Psoas muscle (tissue), 8 donors: ENCODE measurements at regions of chr1 and their contacts with region 1.

Region 1: GRCh38 chr1:178031856-178032320 is 62.0 kb upstream of the RASAL2 start:
- DNase-seq: peak; percentile 85 to 87
- ATAC-seq: peak; percentile 69 to 81 (median 80)
- H3K4me3 ChIP-seq: no peak overlapping the region
- H3K27ac ChIP-seq: no peak overlapping the region
- H3K4me1 ChIP-seq: peaks cover 28% of the 10 kb centered on the region
- H3K27me3 ChIP-seq: no peaks in the 10 kb centered on the region
- CTCF ChIP-seq: peak; percentile 79

Region 2: DNA sequence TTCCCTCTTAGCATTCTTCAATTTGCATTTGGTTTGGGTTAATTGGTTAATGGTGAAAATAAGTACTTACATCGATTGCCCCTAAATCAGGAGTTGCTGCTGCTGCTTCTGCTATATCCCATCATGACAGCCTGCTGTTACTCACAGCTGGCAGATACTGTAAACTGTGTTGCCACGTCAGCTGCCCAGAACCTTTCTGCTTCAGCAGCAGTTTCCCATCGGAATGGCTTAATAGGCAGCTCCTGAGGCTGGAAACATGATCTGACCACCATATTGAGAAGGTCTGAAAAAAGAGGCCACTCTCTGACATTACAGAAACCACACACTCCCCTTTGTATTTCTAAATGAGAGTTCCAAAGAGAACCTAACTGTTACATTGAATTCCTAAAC is 47.8 kb before region 1 on chr1:
- intact Hi-C with region 1: loop called in 1 of 2 experiments (anchors 10 kb)
- DNase-seq: peak; percentile 44 to 68
- ATAC-seq: peak; percentile 86 to 99 (median 96)
- H3K4me3 ChIP-seq: peak overlapping the region; percentile 5
- H3K27ac ChIP-seq: peak overlapping the region; percentile 11
- H3K4me1 ChIP-seq: no peaks in the 10 kb centered on the region
- H3K27me3 ChIP-seq: no peaks in the 10 kb centered on the region
- CTCF ChIP-seq: no peak

Region 3: GRCh38 chr1:178093205-178093957 is 61.5 kb after region 1 on chr1:
- intact Hi-C with region 1: loop called (anchors 5 kb)
- DNase-seq: peak; percentile 93 to 96
- ATAC-seq: peak; percentile 92 to 96 (median 94)
- H3K4me3 ChIP-seq: peak overlapping the region; percentile 72
- H3K27ac ChIP-seq: peak overlapping the region; percentile 79
- H3K4me1 ChIP-seq: peaks cover 21% of the 10 kb centered on the region
- H3K27me3 ChIP-seq: no peaks in the 10 kb centered on the region
- CTCF ChIP-seq: peak; percentile 10

Region 4: GRCh38 chr1:178189814-178190213 is 157.9 kb after region 1 on chr1:
- intact Hi-C with region 1: loop called in 1 of 2 experiments (anchors 5 kb)
- DNase-seq: no peak
- ATAC-seq: peak in 3 of 4 donors; percentile 42 to 73 (median 62)
- H3K4me3 ChIP-seq: no peak overlapping the region
- H3K27ac ChIP-seq: no peak overlapping the region
- H3K4me1 ChIP-seq: no peaks in the 10 kb centered on the region
- H3K27me3 ChIP-seq: no peaks in the 10 kb centered on the region
- CTCF ChIP-seq: peak; percentile 42

Region 5: DNA sequence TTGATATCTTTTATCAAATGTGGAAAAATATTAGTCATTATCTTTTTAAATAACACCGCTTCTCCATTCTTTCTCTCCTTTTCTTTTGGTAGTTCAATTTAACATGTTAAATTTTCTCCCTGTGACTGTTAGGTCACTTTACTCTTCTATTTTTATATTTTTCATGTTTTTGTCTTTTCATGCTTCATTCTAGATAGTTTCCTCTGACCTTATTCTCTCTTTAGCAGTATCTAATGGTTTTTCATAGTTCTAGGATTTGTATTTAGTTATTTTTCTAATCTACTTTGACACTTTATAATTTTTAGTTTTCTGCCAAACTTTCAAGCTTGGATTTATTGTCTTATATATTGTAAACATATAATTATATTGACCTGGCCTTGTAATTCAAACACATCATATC is 178.0 kb after region 1 on chr1:
- intact Hi-C with region 1: no loop called
- DNase-seq: no peak
- ATAC-seq: no peak
- H3K4me3 ChIP-seq: no peak overlapping the region
- H3K27ac ChIP-seq: no peak overlapping the region
- H3K4me1 ChIP-seq: no peaks in the 10 kb centered on the region
- H3K27me3 ChIP-seq: no peaks in the 10 kb centered on the region
- CTCF ChIP-seq: no peak